ENCODE measurements at regions of chr19 and their contacts with region 1.

Region 1: DNA sequence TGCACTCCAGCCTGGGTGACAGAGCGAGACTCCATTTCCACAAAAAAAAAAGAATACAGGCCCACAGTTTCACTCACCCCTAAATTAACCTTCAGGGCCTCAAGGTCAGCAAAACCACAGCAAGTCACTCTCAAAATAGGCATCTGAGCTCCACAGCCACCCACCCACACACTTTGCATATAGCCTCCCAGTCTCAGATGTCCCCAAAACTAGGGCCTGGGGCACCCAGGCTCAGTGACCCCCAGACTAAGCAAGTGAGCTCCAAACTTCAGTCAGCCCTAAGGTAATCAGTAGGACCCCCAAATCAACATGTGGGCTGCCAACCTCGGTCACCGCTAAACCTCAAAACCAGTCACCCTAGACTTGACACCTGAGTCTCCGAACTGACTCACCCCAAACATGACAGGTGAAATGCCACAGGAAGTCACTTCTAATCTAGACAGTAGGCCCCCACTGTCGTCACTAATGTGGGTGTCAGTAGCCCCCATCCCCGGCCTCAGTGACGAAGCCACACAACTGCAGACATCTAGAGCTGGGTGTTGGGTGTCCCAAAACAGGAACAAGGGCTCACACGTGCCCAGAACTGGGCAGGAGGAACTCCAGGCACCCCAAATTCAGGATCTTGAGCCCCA is 13.9 kb downstream of the RABAC1 start:
- DNase-seq: peak; percentile 93
- ATAC-seq: peak; percentile 82
- H3K4me3 Mint-ChIP-seq: peak overlapping the region; percentile 34
- H3K27ac Mint-ChIP-seq: peak overlapping the region; percentile 90
- H3K4me1 Mint-ChIP-seq: peaks cover 53% of the 10 kb centered on the region
- H3K27me3 Mint-ChIP-seq: peaks cover 23% of the 10 kb centered on the region

Region 2: DNA sequence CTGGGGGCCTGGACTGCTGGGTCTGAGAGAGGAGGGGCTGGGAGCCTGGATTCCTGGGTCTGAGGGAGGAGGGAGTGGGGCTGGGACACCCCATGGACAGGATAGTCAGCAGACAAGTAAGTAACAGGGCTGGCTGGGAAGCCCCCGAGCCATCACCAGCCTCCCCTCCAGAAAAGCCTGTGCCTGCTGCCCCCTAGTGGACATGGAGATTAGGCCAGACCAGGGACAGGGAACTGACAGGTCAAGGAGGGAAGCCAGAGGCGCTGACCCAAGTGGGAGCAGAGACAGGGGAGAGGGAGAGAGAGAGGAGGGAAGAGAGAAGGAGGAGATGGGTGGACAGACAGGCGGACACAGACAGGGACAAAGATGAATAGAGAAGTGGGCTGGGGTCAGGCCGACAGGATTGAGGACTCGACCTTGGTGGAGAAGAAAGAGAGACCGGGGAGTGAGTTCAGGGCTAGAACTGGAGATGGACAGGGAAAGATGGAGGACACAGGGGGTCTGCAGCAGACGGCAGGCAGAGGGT is 10.3 kb before region 1 on chr19:
- CTCF ChIA-PET with region 1: interaction called, 15 read pairs
- POLR2A ChIA-PET with region 1: interaction called, 3 read pairs
- DNase-seq: peak; percentile 85
- ATAC-seq: peak; percentile 75
- H3K4me3 Mint-ChIP-seq: no peak overlapping the region
- H3K27ac Mint-ChIP-seq: no peak overlapping the region
- H3K4me1 Mint-ChIP-seq: peaks cover 41% of the 10 kb centered on the region
- H3K27me3 Mint-ChIP-seq: peaks cover 48% of the 10 kb centered on the region

Region 3: GRCh38 chr19:41959056-41960053 is 14.1 kb after region 1 on chr19 and contains the start of gene RABAC1:
- CTCF ChIA-PET with region 1: interaction called, 26 read pairs
- POLR2A ChIA-PET with region 1: interaction called, 14 read pairs
- DNase-seq: peak; percentile 93
- ATAC-seq: peak; percentile 93
- H3K4me3 Mint-ChIP-seq: peak within 1 kb of the TSS; percentile 89
- H3K27ac Mint-ChIP-seq: peak within 1 kb of the TSS; percentile 78
- H3K4me1 Mint-ChIP-seq: peaks cover 20% of the 10 kb centered on the region
- H3K27me3 Mint-ChIP-seq: no peaks in the 10 kb centered on the region
- total RNA-seq, gene RABAC1: 63.0 to 63.4 TPM

Region 4: GRCh38 chr19:42092350-42092749 is 147.1 kb after region 1 on chr19:
- CTCF ChIA-PET with region 1: no interaction called
- POLR2A ChIA-PET with region 1: no interaction called
- DNase-seq: peak; percentile 71
- ATAC-seq: peak; percentile 75
- H3K4me3 Mint-ChIP-seq: no peak overlapping the region
- H3K27ac Mint-ChIP-seq: peak overlapping the region; percentile 70
- H3K4me1 Mint-ChIP-seq: peaks cover 41% of the 10 kb centered on the region
- H3K27me3 Mint-ChIP-seq: no peaks in the 10 kb centered on the region

Measured in activated CD8-positive, alpha-beta T cell treated with anti-CD3 and anti-CD28 coated beads, Interleukin-2, amount 10 ng/mL, durations not matched to agents 7 days and 5 days (primary cell).